OCI-LY7 (cell line): ENCODE measurements at regions of chr3 and their contacts with region 1.

Region 1: DNA sequence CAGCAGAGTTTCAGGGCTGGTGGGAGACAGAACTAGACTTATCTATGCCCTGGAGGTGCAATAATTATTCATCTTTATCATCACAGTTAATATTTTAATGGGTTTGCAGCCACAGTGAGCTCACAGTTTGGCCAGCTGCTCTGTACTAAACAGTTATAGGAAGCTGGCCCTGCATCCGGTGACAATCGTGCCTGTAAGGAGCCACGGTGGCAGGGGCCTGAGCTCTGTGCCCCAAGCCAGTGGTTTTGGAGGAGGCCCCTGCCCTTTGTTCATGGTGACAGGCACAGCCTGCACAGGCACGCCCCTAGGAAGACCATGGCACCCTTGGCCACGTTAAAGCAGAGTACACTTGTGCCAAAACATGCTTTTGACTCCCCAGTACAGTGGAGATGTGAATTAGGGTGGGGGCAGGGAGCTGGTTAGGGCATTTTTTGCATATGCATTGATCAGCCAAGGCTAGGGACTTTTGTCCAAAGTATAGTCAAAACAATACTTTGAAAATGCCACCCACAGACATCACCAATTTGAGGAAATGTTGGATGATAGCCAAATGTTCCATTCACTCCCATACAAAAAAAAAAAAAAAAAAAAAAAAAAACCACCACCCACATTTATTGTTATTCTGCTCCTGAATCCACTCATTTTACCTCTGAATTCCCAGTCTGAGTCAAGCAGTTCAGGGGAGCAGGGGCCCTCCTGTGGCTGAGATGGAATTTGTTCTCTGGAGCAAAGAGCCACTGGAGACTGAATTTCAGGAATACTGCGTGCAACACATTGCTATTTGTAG is 3.4 kb upstream of the RFTN1 start:
- DNase-seq: no peak
- H3K4me3 ChIP-seq: peak overlapping the region; percentile 92
- H3K27ac ChIP-seq: peak overlapping the region; percentile 24
- H3K4me1 ChIP-seq: peaks cover 50% of the 10 kb centered on the region
- CTCF ChIP-seq: peak; percentile 55

Region 2: GRCh38 chr3:16378920-16379319 is 138.0 kb before region 1 on chr3:
- CTCF ChIA-PET with region 1: interaction called, 4 read pairs
- POLR2A ChIA-PET with region 1: interaction called, 31 read pairs
- intact Hi-C with region 1: loop called (anchors 1 kb)
- DNase-seq: no peak
- H3K4me3 ChIP-seq: peak overlapping the region; percentile 4
- H3K27ac ChIP-seq: peak overlapping the region; percentile 99
- H3K4me1 ChIP-seq: peaks cover 96% of the 10 kb centered on the region
- CTCF ChIP-seq: no peak

Region 3: GRCh38 chr3:16496408-16497222 is 20.3 kb before region 1 on chr3:
- CTCF ChIA-PET with region 1: interaction called, 3 read pairs
- POLR2A ChIA-PET with region 1: interaction called, 15 read pairs
- intact Hi-C with region 1: no loop called
- DNase-seq: no peak
- H3K4me3 ChIP-seq: peak overlapping the region; percentile 2
- H3K27ac ChIP-seq: no peak overlapping the region
- H3K4me1 ChIP-seq: peaks cover 69% of the 10 kb centered on the region
- CTCF ChIP-seq: no peak